ENCODE measurements at regions of chr16 and their contacts with region 1.

Region 1: GRCh38 chr16:84970447-84971127 is 40.7 kb downstream of the ZDHHC7 start:
- DNase-seq: peak; percentile 63
- H3K4me3 ChIP-seq: no peak overlapping the region
- H3K27ac ChIP-seq: no peak overlapping the region
- H3K27me3 ChIP-seq: no peaks in the 10 kb centered on the region
- CTCF ChIP-seq: peak; percentile 90

Region 2: DNA sequence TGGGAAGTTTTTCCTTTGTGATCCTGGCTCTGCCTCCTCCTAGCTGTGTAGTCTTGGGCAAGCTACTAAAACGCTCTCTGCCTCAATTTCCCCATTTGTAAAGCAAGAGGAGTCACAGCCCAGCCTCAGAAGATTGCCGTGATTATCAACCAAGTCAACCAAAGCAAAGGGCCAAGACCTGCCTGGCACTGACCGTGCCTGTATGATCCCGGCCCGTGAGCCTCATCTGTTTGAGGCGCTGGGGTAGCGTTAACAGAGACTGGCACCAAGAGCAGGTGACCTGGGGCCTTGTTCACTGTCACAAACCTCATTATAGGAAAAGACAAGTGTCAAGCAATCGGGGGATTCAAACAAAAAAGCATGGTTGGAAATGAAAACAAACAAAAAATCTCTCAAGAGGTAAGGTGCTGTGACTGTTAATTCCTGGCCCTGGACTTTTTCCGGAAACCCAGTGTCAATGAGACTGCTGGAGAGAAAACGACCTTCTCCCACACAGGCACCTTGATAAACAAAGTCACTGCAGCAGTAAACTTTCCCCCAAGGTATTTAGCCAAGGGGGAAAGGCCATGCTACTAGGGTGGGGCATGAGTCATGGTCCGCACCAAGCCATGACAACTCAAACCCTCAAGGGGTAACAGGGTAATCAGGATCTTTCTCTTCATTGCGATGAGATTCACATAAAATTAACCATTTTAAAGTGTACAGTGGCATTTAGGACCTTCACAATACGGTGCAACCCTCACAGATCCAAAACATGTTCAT is 471.5 kb before region 1 on chr16:
- in situ Hi-C with region 1: no loop called
- DNase-seq: no peak
- H3K4me3 ChIP-seq: no peak overlapping the region
- H3K27ac ChIP-seq: no peak overlapping the region
- H3K27me3 ChIP-seq: no peaks in the 10 kb centered on the region
- CTCF ChIP-seq: no peak

Region 3: DNA sequence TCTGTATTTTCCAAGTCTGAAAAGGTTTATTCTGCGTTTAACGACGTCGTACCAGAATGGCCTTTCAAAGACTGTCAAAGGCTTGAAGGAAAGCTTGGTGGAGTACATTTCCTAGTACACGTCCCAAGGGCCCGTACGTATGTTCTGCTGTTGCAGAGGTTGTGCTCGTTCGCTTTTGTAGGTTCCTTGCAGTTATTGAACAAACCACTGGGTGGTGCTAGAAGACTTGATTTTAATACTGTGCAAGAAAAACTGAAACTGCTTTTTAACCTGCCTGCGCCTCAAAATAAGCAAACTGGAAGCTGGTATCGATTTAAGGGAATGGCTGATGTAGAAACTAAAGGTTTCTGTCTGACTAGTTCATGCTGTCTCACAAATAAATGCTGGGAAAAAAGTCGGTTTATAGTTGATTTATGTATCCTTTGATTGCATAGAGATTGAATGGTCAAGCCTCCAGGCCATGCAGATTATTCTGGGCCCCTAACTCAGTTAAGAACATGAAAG is 216.2 kb before region 1 on chr16:
- in situ Hi-C with region 1: loop called (anchors 10 kb)
- DNase-seq: peak; percentile 95
- H3K4me3 ChIP-seq: no peak overlapping the region
- H3K27ac ChIP-seq: peak overlapping the region; percentile 21
- H3K27me3 ChIP-seq: no peaks in the 10 kb centered on the region
- CTCF ChIP-seq: peak; percentile 74